OCI-LY7 (cell line): ENCODE measurements at regions of chr4 and their contacts with region 1.

Region 1: DNA sequence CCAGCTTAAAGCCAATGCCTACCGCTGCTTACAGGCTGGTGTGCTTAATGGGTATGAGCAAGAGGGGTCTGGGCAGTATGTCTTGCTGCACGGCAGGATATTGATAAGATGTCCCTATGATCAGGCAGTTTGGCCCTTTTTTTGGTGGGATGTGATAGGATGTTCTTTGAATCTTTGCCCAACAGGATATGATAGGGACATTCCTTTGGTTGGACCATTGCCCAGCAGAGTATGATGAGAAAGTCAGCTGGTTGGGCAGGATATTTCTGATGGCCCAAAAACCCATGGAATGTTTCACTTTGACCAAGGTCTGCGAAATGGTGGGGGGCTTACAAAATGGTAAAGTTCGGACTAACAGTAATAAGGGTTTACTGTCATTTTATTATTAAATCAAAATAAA is 1060.6 kb downstream of the STIM2 start:
- DNase-seq: no peak
- H3K4me3 ChIP-seq: no peak overlapping the region
- H3K27ac ChIP-seq: no peak overlapping the region
- H3K4me1 ChIP-seq: no peaks in the 10 kb centered on the region
- CTCF ChIP-seq: no peak

Region 2: GRCh38 chr4:27888505-27888904 is 32.7 kb before region 1 on chr4:
- CTCF ChIA-PET with region 1: no interaction called
- POLR2A ChIA-PET with region 1: no interaction called
- intact Hi-C with region 1: no loop called
- DNase-seq: no peak
- H3K4me3 ChIP-seq: no peak overlapping the region
- H3K27ac ChIP-seq: no peak overlapping the region
- H3K4me1 ChIP-seq: no peaks in the 10 kb centered on the region
- CTCF ChIP-seq: no peak

Region 3: GRCh38 chr4:28109801-28110200 is 188.6 kb after region 1 on chr4:
- CTCF ChIA-PET with region 1: no interaction called
- POLR2A ChIA-PET with region 1: interaction called, 10 read pairs
- intact Hi-C with region 1: no loop called
- DNase-seq: no peak
- H3K4me3 ChIP-seq: no peak overlapping the region
- H3K27ac ChIP-seq: no peak overlapping the region
- H3K4me1 ChIP-seq: no peaks in the 10 kb centered on the region
- CTCF ChIP-seq: no peak